Esophagus muscularis mucosa (tissue), 4 donors: ENCODE measurements at regions of chr5 and their contacts with region 1.

Region 1: GRCh38 chr5:10695055-10695649 is 65.9 kb downstream of the DAP start:
- DNase-seq: no peak
- H3K4me3 ChIP-seq: no peak overlapping the region
- H3K27ac ChIP-seq: no peak overlapping the region
- H3K4me1 ChIP-seq: peaks cover 5 to 17% (median 12%) of the 10 kb centered on the region in 4 donors
- H3K27me3 ChIP-seq: no peaks in the 10 kb centered on the region
- CTCF ChIP-seq: peak; percentile 60 to 81 (median 61)
- EP300 ChIP-seq: no peak
- POLR2A ChIP-seq: no peak

Region 2: DNA sequence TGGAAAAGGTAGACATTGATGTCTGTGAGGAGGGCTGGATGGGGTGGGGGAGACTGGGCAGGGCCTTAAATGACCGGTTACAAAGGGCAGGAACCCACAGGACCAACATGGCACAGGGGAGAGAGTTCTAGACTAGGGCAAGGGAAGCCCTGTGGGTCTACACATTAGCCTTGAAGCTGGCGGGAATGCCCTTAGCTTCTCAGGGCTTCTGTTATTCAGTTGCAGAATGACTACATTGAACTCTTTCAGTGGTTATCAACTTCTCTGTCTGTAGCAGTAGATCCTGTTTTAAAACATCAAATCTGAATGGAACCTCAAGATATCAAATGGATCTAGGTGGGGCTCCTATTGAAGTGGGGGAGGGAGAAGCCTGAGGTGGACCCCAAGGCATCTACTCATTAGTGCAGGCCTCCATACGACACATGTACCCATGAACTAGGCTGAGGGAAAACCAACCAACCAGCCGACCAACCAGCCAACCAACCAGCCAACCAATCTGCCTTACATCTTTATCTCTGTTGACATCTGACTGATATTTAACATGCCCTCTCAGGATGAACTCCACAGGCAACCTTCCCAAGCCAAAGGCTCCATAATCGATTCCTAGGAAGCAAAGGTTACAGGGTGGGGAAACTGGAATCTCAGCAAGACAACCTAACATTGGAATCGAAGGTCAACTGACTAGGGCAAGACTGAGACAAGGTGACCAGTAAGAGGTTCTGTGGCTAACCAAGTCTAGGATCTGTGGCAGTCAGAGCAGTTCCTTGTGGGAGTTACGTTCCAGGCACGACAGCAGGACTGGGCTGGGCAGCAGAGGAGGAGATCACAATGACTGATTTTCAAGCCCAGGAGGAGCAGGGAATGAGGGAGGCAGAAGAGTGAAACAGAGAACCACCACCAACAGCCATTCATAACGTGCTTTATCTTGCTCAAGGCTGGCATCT is 17.7 kb after region 1 on chr5:
- intact Hi-C with region 1: no loop called
- DNase-seq: no peak
- H3K4me3 ChIP-seq: no peak overlapping the region
- H3K27ac ChIP-seq: no peak overlapping the region
- H3K4me1 ChIP-seq: peaks cover 0 to 5% (median 0%) of the 10 kb centered on the region in 4 donors
- H3K27me3 ChIP-seq: no peaks in the 10 kb centered on the region
- CTCF ChIP-seq: no peak
- EP300 ChIP-seq: no peak
- POLR2A ChIP-seq: no peak

Region 3: DNA sequence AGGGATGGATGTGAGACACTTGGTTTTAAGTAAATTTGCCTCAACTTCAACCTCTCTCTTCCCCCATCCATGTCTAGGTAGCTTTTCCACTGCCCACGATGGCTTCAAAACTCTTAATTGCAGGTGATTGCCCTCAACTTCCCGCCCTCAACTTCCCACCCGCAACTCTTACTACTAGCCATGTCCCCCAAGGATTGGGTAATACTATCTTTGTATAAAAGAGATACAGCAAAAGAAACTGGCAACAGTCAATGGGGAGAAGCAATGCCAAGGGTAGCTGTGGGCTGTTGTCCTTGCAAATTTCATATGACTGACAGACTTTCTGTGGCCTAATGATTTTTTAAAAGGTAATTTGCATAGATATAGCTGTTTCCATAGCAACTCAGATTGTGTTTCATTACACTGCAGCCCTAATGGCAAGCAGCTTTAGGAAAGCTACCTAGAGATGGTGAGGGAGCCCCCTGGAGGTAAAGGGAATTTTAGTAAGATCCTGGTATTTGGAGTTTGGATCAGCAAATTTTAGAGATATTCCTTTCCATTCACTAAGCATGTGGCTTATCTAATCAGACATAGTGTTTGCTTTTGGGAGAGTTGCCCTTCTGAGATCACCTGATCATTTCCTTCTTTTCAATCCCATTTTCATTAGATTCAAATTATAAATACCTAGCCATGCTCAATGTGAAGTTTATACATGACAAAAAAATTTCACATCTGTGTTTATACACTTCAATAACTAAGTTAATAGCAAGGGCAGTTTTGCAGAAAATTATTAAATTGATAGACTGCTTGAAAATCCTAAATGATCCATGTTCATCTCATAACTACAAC is 487.5 kb after region 1 on chr5:
- intact Hi-C with region 1: loop called (anchors 5 kb)
- DNase-seq: no peak
- H3K4me3 ChIP-seq: no peak overlapping the region
- H3K27ac ChIP-seq: no peak overlapping the region
- H3K4me1 ChIP-seq: no peaks in the 10 kb centered on the region
- H3K27me3 ChIP-seq: no peaks in the 10 kb centered on the region
- CTCF ChIP-seq: peak in 2 of 3 experiments; percentile 18 to 25
- EP300 ChIP-seq: no peak
- POLR2A ChIP-seq: no peak